Activated naive CD4-positive, alpha-beta T cell treated with anti-CD3 and anti-CD28 coated beads, Interleukin-2, amount 10 ng/mL, durations not matched to agents 7 days and 5 days (primary cell): ENCODE measurements at regions of chr6 and their contacts with region 1.

Region 1: DNA sequence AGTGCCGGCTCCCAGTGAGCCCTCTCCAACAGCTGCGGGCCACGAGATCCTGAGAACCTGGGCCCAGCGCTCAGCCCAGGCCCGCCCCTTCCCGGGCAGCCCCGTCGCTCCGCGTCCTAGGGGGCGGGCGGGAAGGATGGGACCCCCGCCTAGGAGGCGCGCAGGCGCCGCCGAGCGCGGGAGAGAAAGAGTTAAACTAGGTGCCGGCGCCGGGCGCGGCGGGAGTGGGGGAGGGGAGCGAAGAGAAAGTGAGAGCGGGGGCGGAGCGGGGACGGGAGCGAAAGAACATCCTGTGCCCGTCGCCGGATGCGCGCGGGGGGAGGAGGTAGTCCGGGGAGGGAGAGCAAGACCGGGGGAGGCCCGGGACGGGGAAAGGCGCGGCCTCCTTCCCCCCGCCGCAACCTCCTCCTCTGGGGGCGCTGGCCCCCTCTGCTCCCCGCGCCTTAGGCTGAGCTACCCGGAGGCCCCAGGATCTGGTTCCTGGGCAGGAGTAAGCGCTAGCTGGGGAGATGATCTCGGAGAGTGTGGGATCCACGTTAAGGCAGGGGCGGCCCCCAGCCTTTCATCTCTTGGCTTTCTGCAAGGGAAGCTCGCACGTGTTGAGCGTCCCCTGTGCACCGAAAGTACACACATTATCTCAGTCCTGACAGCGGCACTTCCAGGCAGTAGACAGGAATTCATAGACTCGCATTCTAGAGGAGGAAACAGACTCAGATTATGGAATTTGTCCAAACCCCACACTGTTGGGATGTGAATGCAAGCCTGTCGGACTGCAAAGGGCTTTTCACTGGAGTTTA is 4.9 kb upstream of the ARMC12 start:
- DNase-seq: peak; percentile 98
- H3K4me3 Mint-ChIP-seq: peak overlapping the region; percentile 82
- H3K27ac Mint-ChIP-seq: peak overlapping the region; percentile 99
- H3K4me1 Mint-ChIP-seq: peaks cover 81% of the 10 kb centered on the region
- H3K27me3 Mint-ChIP-seq: no peaks in the 10 kb centered on the region

Region 2: DNA sequence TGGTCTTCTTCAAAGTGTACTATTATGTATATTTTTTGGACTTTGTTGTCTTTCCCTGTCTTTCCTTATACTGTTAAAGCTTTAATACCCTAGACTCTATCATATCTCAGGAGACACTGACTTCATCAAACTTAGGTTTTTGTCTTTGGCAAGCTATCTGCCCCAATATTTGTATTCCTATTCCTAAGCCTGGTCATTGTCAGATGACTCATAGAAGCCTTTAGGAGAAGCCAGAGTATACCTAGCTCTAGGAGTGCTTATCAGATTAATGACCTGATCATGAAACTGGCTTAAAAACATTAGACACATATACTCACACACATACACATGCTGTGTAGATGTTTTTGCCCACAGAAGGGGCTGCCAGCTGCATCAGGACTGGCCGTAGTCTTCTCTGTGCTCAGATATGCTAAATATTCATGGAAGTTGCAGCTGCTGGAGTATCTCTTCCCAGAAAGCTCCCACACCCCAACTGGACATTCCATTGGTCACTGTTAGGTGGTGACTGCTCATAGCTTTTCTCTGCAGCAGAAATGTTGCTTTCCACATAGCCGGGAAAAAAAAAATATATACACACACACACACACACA is 740.9 kb before region 1 on chr6:
- CTCF ChIA-PET with region 1: no interaction called
- DNase-seq: no peak
- H3K4me3 Mint-ChIP-seq: no peak overlapping the region
- H3K27ac Mint-ChIP-seq: no peak overlapping the region
- H3K4me1 Mint-ChIP-seq: no peaks in the 10 kb centered on the region
- H3K27me3 Mint-ChIP-seq: no peaks in the 10 kb centered on the region

Region 3: DNA sequence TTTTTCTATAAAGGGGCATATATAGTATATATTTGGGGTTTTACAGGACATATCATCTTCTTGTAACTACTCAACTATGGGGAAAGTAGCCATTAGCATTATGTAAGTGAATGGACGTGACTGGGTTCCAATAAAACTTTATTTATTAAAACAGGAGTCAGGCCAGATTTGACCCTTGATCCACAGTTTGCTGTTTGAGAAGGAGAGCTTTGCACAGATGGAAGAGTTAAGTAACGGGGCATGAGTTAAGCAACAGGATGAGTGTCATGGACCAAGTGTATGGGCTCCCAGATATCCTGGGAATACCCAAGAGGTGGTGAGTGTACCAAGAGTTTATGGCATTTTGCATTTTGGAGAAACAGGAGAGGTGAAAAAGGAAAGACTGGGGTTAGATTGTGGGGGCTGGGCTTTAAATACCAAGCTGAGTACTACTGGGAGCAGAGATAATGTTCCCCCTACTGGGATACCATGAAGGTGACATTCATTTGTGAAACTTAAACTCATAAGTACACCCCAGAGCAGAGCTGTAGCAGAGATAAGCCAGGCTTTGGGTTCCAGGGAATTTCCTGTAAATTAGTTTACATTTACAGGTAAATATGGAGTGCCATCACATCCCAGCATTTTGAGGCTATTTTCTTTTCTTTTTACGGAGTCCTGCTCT is 536.7 kb before region 1 on chr6:
- CTCF ChIA-PET with region 1: no interaction called
- DNase-seq: no peak
- H3K4me3 Mint-ChIP-seq: no peak overlapping the region
- H3K27ac Mint-ChIP-seq: no peak overlapping the region
- H3K4me1 Mint-ChIP-seq: no peaks in the 10 kb centered on the region
- H3K27me3 Mint-ChIP-seq: peaks cover 47% of the 10 kb centered on the region

Region 4: GRCh38 chr6:35522660-35523658 is 209.0 kb before region 1 on chr6:
- CTCF ChIA-PET with region 1: interaction called, 74 read pairs
- DNase-seq: peak; percentile 82
- H3K4me3 Mint-ChIP-seq: peak overlapping the region; percentile 58
- H3K27ac Mint-ChIP-seq: peak overlapping the region; percentile 83
- H3K4me1 Mint-ChIP-seq: peaks cover 19% of the 10 kb centered on the region
- H3K27me3 Mint-ChIP-seq: peaks cover 35% of the 10 kb centered on the region

Region 5: DNA sequence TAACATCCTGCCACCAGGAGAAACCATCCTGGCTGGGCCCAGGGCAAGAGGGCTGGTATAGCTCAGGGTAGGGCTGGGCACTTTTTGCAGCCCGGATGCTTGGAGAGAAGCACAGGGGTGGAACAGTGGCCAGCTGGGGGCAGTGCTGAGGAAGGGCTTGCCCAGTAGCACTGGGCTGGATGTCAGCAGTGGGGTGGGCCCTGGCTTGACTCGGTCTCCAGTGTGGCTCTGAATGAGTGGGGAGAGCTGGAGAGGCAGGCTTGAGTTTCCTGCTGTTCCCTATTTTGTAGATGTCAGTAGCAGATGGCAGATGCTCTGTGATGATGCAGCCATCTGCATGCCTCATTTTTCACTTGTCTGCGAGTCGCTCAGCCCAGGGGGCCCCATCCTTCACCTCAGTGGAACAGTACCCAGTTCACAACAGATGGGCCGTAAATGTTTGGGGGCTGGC is 162.9 kb before region 1 on chr6:
- CTCF ChIA-PET with region 1: interaction called, 30 read pairs
- DNase-seq: peak; percentile 60
- H3K4me3 Mint-ChIP-seq: no peak overlapping the region
- H3K27ac Mint-ChIP-seq: no peak overlapping the region
- H3K4me1 Mint-ChIP-seq: no peaks in the 10 kb centered on the region
- H3K27me3 Mint-ChIP-seq: peaks cover 23% of the 10 kb centered on the region

Region 6: GRCh38 chr6:35590622-35591066 is 141.3 kb before region 1 on chr6:
- CTCF ChIA-PET with region 1: interaction called, 169 read pairs
- DNase-seq: no peak
- H3K4me3 Mint-ChIP-seq: no peak overlapping the region
- H3K27ac Mint-ChIP-seq: no peak overlapping the region
- H3K4me1 Mint-ChIP-seq: peaks cover 75% of the 10 kb centered on the region
- H3K27me3 Mint-ChIP-seq: no peaks in the 10 kb centered on the region

Region 7: GRCh38 chr6:35624341-35625070 is 107.4 kb before region 1 on chr6:
- CTCF ChIA-PET with region 1: interaction called, 37 read pairs
- DNase-seq: no peak
- H3K4me3 Mint-ChIP-seq: no peak overlapping the region
- H3K27ac Mint-ChIP-seq: peak overlapping the region; percentile 79
- H3K4me1 Mint-ChIP-seq: peaks cover 30% of the 10 kb centered on the region
- H3K27me3 Mint-ChIP-seq: no peaks in the 10 kb centered on the region

Region 8: DNA sequence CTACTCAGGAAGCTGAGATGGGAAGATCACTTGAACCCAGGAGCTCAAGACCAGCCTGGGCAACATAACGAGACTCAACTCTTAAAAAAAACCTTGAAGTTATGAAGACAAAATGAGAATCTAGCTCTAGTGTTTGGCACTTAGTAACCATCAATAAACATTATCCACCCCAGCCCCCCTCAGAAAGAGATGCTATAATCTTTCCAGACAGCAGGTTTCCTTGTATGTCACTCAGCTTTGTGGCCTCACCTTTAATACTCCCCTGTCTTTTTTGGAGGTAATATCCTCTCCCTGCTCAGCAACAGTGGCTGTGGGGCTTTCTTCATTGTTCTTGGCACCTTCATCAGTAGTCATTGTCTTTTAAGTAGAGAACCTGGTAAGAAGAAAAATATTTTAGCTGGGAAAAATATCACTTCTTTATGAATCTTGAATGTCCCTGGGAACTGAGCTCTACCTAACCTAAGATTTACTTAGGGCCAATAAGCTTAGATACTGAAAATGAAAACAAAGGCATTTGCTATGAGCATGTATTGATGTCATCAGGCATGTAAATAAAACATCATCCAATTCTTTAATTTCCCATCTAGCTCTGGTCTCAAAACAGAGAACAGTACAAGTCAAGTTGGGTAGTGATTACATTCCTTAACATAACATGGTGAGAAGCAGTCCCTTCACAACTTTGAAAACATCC is 89.3 kb before region 1 on chr6:
- CTCF ChIA-PET with region 1: interaction called, 14 read pairs
- DNase-seq: no peak
- H3K4me3 Mint-ChIP-seq: no peak overlapping the region
- H3K27ac Mint-ChIP-seq: peak overlapping the region; percentile 78
- H3K4me1 Mint-ChIP-seq: peaks cover 60% of the 10 kb centered on the region
- H3K27me3 Mint-ChIP-seq: no peaks in the 10 kb centered on the region

Region 9: GRCh38 chr6:35687658-35688580 is 44.0 kb before region 1 on chr6:
- CTCF ChIA-PET with region 1: interaction called, 43 read pairs
- DNase-seq: peak; percentile 75
- H3K4me3 Mint-ChIP-seq: peak overlapping the region; percentile 89
- H3K27ac Mint-ChIP-seq: peak overlapping the region; percentile 88
- H3K4me1 Mint-ChIP-seq: peaks cover 16% of the 10 kb centered on the region
- H3K27me3 Mint-ChIP-seq: no peaks in the 10 kb centered on the region